ENCODE measurements at regions of chr1 and their contacts with region 1.

Region 1: GRCh38 chr1:204207136-204207616 is 6.6 kb downstream of the GOLT1A start:
- DNase-seq: peak; percentile 50 to 61 (median 55)
- H3K4me3 ChIP-seq: no peak overlapping the region
- H3K4me3 Mint-ChIP-seq: no peak overlapping the region
- H3K27ac ChIP-seq: no peak overlapping the region
- H3K27ac Mint-ChIP-seq: no peak overlapping the region
- H3K4me1 ChIP-seq: no peaks in the 10 kb centered on the region
- H3K4me1 Mint-ChIP-seq: peaks cover 0 to 4% (median 2%) of the 10 kb centered on the region in 4 donors
- H3K27me3 ChIP-seq: peaks cover 5% of the 10 kb centered on the region
- H3K27me3 Mint-ChIP-seq: peaks cover 20 to 32% of the 10 kb centered on the region in 2 donors

Region 2: DNA sequence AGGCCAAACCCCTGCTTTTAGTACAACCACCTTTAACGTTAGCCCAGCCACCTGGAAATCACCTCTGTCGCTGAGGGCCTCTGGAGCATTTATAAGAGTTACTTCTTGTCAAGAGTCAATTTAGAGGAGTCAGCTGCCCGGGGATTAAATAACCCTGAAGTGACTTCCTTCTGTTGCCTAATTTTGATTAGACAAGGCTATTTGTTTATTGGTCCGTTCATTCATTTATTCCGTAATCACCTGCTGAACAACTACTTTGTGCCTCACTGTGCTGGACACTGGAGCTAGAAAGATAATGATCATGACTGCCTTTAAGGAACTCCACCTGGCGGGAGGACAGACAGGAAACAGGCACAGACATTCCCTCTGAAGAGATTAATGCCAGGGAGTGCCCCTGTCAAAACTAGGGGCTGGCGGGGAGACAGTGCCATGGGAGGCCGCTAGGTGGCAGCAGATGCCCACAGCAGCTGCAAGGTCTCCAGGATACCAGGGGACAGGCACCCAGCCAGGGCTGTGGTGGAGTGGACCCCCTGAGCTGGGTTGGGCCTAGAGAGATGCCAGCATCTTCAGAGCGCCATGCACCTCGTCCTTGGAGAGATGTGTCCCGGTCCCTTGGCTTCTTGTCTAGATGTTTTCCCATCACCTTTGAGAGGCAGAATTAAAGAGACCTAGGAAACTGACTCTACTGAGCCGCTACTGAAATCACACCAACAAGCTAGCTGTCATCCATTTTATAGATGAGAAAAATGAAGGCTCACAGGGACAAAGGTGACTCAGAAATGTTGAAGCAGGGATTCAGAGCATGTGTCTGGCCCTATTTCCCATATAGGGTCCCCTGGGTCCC is 44.7 kb before region 1 on chr1:
- CTCF ChIA-PET with region 1: interaction called, 35 read pairs
- POLR2A ChIA-PET with region 1: no interaction called
- intact Hi-C with region 1: loop called (anchors 1 kb)
- DNase-seq: peak; percentile 65 to 76 (median 68)
- H3K4me3 ChIP-seq: no peak overlapping the region
- H3K4me3 Mint-ChIP-seq: no peak overlapping the region
- H3K27ac ChIP-seq: no peak overlapping the region
- H3K27ac Mint-ChIP-seq: no peak overlapping the region
- H3K4me1 ChIP-seq: no peaks in the 10 kb centered on the region
- H3K4me1 Mint-ChIP-seq: no peaks in the 10 kb centered on the region
- H3K27me3 ChIP-seq: no peaks in the 10 kb centered on the region
- H3K27me3 Mint-ChIP-seq: peaks cover 2 to 4% of the 10 kb centered on the region in 2 donors

Measured in CD4-positive, alpha-beta memory T cell (primary cell).